ENCODE measurements at regions of chr1 and their contacts with region 1.

Region 1: GRCh38 chr1:94061513-94062443 is 59.2 kb downstream of the ABCA4 start:
- DNase-seq: peak; percentile 72 to 84 (median 81)
- ATAC-seq: peak; percentile 84 to 89
- H3K4me3 ChIP-seq: no peak overlapping the region
- H3K27ac ChIP-seq: no peak overlapping the region
- H3K4me1 ChIP-seq: peaks cover 9% of the 10 kb centered on the region
- H3K27me3 ChIP-seq: no peaks in the 10 kb centered on the region

Region 2: GRCh38 chr1:94237291-94238226 is 175.8 kb after region 1 on chr1 and contains the start of gene ARHGAP29:
- intact Hi-C with region 1: loop called (anchors 5 to 10 kb)
- DNase-seq: peak; percentile 88 to 94 (median 93)
- ATAC-seq: peak; percentile 97
- H3K4me3 ChIP-seq: peak within 1 kb of the TSS; percentile 68
- H3K27ac ChIP-seq: peak within 1 kb of the TSS; percentile 93
- H3K4me1 ChIP-seq: peaks cover 2% of the 10 kb centered on the region
- H3K27me3 ChIP-seq: no peaks in the 10 kb centered on the region
- total RNA-seq, gene ARHGAP29: 22.1 to 31.1 (median 30.3) TPM

Region 3: DNA sequence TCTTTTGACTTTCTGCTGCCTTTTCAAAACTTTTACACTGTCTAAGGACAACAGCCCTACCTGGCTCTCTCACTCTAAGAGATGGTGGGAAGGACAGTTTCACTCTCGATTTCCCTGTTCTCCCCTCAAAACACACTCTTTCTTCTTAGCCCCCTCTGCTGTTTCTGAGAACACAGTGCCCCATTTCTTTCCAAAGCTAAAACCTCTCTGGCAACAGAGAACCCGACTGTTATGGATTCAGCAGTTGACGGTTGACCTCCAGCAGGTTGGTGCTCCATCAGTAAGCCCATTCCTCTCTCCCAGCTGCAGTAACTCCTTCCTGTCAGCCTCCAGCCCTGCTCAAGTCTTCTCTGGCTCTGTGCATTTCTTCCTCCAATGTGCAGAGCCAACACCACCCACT is 268.2 kb after region 1 on chr1:
- intact Hi-C with region 1: loop called in 3 of 4 experiments (anchors 5 kb)
- DNase-seq: no peak
- ATAC-seq: peak; percentile 37 to 40
- H3K4me3 ChIP-seq: no peak overlapping the region
- H3K27ac ChIP-seq: peak overlapping the region; percentile 32
- H3K4me1 ChIP-seq: peaks cover 2% of the 10 kb centered on the region
- H3K27me3 ChIP-seq: no peaks in the 10 kb centered on the region

Region 4: GRCh38 chr1:94335950-94336349 is 274.2 kb after region 1 on chr1:
- intact Hi-C with region 1: loop called (anchors 2 to 5 kb)
- DNase-seq: peak; percentile 65 to 70 (median 69)
- ATAC-seq: peak; percentile 86 to 88
- H3K4me3 ChIP-seq: no peak overlapping the region
- H3K27ac ChIP-seq: no peak overlapping the region
- H3K4me1 ChIP-seq: no peaks in the 10 kb centered on the region
- H3K27me3 ChIP-seq: no peaks in the 10 kb centered on the region

Measured in right cardiac atrium (tissue), 5 donors.